Activated CD4-positive, alpha-beta memory T cell treated with anti-CD3 and anti-CD28 coated beads for 36 hours (primary cell): ENCODE measurements at regions of chr3 and their contacts with region 1.

Region 1: DNA sequence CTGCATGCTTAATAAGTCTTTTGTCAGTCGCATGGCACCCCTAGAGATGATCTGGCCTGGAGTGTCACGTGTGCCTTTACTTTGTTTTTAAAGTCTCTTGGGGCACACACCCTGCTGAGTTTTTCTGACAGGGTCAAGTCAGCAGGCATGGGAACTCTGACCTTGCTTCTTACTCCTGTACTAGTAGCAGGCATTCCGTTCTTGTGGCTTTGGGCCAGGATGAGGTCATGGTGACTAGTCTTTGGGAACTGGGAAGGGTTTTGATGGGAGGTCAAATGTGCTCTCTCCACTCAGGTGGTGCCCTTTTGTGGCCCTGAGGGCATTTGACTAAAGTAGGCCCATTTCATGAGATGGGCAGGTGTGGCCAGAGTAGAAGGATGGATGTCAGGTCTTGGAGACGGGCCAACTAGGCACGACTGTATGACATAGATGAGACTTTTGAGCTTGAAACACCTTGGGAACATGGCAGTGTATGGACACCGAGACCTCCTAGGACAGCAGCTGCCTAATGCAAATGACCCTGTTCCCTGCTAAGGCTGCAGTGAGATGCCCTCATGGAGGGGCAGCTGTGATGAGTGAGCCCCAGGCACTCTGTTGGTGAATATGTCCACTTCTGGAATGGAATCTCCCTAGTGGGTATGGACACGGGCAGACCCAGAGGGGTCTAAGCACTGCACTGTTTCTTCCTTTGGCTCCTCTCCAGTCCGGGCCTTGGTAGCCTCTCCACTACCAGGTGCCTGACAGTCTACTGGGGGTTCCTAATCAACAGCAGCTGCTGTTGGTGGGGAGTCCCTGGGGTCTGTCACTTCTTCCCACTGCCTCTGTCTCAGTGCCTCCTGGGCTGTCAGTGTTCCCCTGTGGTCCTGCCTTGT is 16.4 kb downstream of the SRPRB start:
- DNase-seq: no peak
- H3K4me3 Mint-ChIP-seq: no peak overlapping the region
- H3K27ac Mint-ChIP-seq: no peak overlapping the region
- H3K4me1 Mint-ChIP-seq: peaks cover 4% of the 10 kb centered on the region
- H3K27me3 Mint-ChIP-seq: no peaks in the 10 kb centered on the region

Region 2: GRCh38 chr3:133927540-133928066 is 105.6 kb after region 1 on chr3:
- CTCF ChIA-PET with region 1: interaction called, 16 read pairs
- POLR2A ChIA-PET with region 1: no interaction called
- intact Hi-C with region 1: loop called (anchors 1 kb)
- DNase-seq: peak; percentile 72
- H3K4me3 Mint-ChIP-seq: peak overlapping the region; percentile 38
- H3K27ac Mint-ChIP-seq: no peak overlapping the region
- H3K4me1 Mint-ChIP-seq: peaks cover 6% of the 10 kb centered on the region
- H3K27me3 Mint-ChIP-seq: peaks cover 10% of the 10 kb centered on the region